ENCODE measurements at regions of chr12 and their contacts with region 1.

Region 1: GRCh38 chr12:115916910-115917668 is 360.4 kb downstream of the MED13L start:
- DNase-seq: peak; percentile 86
- ATAC-seq: peak; percentile 97
- H3K4me3 ChIP-seq: no peak overlapping the region
- H3K27ac ChIP-seq: no peak overlapping the region
- H3K4me1 ChIP-seq: peaks cover 4% of the 10 kb centered on the region
- H3K27me3 ChIP-seq: peaks cover 19% of the 10 kb centered on the region
- CTCF ChIP-seq: peak; percentile 98

Region 2: DNA sequence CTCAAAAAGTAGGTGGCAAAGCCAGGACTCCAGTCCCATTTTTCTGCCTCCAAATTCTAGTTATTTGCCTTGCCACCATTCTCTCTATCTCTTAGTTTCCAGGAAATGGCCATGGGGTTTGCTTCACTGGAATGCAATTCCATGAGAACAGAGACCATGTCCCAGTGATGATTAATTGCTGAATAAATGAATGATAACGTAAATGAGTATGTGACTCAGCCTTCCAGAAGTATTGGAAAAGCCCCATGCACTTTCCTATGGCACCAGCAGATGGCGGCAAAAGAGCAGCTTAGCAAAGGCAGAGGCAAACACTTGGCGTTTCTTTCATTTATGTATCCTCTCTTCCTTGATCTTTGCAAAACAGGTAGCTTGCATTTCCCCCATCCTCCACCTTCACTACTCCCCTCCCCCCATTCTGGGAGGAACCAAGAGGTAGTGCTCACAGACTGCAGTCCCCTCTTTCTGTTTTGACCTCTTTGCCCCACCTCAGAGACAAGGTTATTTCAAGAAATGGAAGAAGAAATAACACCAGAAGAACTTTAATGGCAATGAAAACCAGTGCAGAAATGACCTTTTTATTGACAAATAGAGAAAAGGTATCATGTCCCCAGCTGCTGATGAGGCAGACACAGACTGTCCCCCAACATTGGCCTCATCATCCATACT is 1254.4 kb before region 1 on chr12:
- intact Hi-C with region 1: loop called (anchors 5 kb)
- DNase-seq: peak; percentile 79
- ATAC-seq: peak; percentile 76
- H3K4me3 ChIP-seq: no peak overlapping the region
- H3K27ac ChIP-seq: no peak overlapping the region
- H3K4me1 ChIP-seq: no peaks in the 10 kb centered on the region
- H3K27me3 ChIP-seq: peaks cover 44% of the 10 kb centered on the region
- CTCF ChIP-seq: peak; percentile 99

Region 3: GRCh38 chr12:115710104-115710564 is 207.0 kb before region 1 on chr12:
- intact Hi-C with region 1: no loop called
- DNase-seq: no peak
- ATAC-seq: peak; percentile 39
- H3K4me3 ChIP-seq: no peak overlapping the region
- H3K27ac ChIP-seq: no peak overlapping the region
- H3K4me1 ChIP-seq: no peaks in the 10 kb centered on the region
- H3K27me3 ChIP-seq: no peaks in the 10 kb centered on the region
- CTCF ChIP-seq: no peak

Region 4: DNA sequence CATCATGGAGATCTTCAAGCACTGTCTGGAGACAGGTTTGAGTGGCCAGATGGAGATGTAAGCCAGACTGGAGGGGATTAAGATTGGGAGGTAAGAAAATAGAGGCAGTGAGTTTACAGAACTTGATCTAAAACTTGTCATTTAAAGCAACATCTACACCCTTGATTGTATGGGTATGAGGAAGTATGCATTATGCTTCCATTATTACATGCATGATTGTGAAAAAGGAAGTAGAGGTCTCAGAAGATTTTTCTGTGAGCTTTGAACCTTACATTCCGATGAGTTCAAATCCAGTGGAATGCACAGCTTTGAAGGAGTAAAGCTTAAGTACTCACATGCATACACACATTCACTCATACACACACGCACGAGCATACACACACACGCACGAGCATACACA is 190.4 kb before region 1 on chr12:
- intact Hi-C with region 1: no loop called
- DNase-seq: no peak
- ATAC-seq: no peak
- H3K4me3 ChIP-seq: no peak overlapping the region
- H3K27ac ChIP-seq: no peak overlapping the region
- H3K4me1 ChIP-seq: no peaks in the 10 kb centered on the region
- H3K27me3 ChIP-seq: no peaks in the 10 kb centered on the region
- CTCF ChIP-seq: no peak